ENCODE measurements at regions of chr22 and their contacts with region 1.

Region 1: DNA sequence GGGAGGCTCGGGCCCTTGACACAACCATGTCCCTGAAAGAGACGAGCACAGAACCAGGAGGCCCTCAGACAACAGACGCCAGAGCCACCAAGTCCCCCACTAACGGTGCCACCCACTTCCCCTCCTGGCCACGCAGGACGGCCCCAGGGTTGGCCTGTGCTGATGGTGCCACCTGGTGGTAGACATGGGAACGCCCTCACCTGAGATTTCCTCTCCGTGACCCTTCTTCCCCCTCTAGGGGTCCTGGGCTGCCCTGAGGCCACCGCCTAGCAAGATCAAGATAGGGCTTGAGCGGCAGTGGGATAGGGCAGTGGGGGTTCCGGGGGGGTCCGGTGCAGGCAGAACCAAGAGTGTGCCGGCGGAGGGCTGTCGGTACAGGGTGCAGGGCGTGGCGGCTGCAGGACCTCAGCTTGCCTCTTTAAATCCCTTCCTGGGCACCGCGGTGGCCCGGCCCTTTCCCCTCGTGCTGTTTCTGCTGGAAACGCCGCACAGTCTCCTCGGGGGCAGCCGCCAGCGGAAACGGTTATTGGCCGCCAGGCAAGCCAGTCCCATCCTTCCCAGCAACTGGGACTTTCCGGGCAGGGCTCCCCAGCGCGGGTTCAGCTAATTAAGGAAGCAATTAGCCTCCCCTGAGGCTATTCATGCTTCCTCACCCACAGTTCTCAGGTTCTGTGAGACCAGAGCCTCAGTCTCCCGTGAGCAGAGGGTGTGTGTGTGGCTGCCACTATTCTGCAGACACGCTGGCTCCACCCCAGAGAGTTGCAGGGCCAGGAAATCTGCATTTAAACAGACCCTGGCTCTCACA is 5.5 kb upstream of the NFAM1 start:
- DNase-seq: peak; percentile 47 to 91
- H3K4me3 ChIP-seq: peak overlapping the region; percentile 30
- H3K4me1 ChIP-seq: peaks cover 3% of the 10 kb centered on the region; the same call in 1 of the 2 replicates
- H3K27me3 ChIP-seq: no peaks in the 10 kb centered on the region; the same call in 1 of the 2 replicates

Region 2: DNA sequence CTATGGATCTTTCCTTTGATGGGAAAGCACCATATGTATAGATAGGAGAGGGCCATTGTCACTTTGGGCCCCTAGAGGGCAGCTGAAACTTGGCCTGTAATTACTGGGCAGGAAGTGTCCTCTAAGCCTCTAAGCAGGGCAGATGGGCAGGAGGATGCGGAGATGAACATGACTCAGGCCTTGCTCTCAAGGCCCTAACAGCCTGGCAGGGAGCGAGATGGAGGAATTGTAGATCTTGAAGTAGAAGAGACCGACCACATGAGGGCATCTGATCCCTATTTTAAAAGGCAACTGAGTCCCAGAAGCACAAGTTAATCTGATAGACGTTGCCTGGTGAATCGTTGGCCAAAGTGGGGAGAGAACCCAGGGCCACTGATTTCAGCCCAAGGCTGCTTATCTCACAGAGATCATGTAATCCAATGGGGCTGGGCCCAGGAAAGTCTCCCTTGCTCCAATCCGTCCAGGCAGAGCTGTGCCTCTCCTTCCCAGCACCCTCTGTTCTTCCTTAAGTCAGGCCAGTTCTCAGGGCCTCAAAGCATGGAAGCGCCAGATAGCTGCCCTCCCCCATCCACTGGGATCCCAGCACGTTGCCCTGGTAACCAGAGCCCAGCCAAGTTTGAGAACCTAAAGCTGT is 471.0 kb before region 1 on chr22:
- in situ Hi-C with region 1: loop called (anchors 10 kb)
- DNase-seq: peak in 1 of 2 experiments; percentile 38
- H3K4me3 ChIP-seq: no peak overlapping the region
- H3K4me1 ChIP-seq: no peaks in the 10 kb centered on the region
- H3K27me3 ChIP-seq: peaks cover 6% of the 10 kb centered on the region; the same call in 1 of the 2 replicates

Region 3: DNA sequence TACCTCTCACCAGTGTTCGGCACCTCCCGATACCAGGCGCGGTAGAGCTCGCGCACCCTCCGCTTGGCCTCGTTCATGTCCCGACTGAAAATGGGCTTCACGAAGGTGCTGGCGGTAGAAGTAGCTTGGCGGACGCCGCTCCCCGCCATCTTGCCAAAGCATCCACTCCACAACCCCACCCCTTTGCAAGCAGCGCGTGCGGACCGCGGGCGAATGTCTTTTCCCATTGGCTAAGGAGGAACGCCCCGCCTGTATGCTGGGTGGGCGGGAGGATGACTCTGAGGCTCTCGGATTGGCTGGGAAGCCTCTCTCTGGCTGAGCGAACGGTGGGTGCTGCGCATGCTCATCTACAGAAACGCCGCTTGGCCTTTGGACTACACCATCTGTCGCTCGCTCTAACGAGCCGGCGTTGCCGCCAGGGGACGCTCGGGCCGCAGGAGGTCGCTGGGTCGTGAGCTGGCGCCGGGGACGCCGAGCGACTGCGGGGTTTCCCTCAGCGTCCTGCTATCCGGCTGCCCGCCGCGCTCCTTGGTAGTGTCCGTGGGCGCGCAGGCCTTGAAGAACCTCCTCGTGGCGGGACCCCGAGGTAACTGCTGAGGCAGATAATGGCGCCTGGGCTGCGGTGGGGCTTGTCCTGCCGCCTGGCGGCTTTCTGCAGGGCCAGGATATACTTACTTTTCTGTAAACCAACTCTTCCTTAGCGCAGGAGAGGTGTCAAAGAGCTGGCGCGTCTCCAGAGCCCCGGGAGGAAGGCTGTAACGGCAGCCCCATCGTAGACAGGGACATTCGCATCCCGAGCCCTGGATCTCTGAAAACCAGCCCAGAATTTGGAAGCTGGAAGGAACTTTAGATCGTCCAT is 346.9 kb before region 1 on chr22 and contains the start of gene NDUFA6:
- in situ Hi-C with region 1: loop called (anchors 10 kb)
- DNase-seq: peak; percentile 99
- H3K4me3 ChIP-seq: peak within 1 kb of the TSS; percentile 81
- H3K4me1 ChIP-seq: no peaks in the 10 kb centered on the region
- H3K27me3 ChIP-seq: no peaks in the 10 kb centered on the region